MCF 10A (cell line): ENCODE measurements at regions of chr11 and their contacts with region 1.

Region 1: DNA sequence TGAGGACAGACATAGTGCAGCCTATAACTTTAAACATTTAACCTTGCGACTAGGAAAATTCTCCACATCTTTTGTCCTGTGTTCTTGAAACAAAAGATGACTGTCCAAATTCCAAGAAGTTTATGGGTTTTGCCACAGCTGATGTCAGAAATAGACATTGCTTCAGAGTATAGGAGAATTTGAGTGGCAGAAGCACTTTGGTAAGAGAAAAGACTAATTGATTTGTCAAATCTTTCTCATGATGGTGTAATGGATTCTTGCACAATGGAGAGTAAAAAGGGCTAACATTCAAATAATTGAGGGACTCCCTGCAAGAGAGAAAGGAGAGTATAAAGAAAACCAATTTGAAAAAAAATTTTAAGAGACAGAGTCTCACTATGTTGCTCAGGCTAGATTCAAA is 25.3 kb downstream of the C11orf58 start:
- DNase-seq: no peak
- H3K4me3 Mint-ChIP-seq: no peak overlapping the region
- H3K27ac Mint-ChIP-seq: no peak overlapping the region
- H3K4me1 Mint-ChIP-seq: no peaks in the 10 kb centered on the region
- H3K27me3 Mint-ChIP-seq: no peaks in the 10 kb centered on the region
- CTCF ChIP-seq: no peak

Region 2: DNA sequence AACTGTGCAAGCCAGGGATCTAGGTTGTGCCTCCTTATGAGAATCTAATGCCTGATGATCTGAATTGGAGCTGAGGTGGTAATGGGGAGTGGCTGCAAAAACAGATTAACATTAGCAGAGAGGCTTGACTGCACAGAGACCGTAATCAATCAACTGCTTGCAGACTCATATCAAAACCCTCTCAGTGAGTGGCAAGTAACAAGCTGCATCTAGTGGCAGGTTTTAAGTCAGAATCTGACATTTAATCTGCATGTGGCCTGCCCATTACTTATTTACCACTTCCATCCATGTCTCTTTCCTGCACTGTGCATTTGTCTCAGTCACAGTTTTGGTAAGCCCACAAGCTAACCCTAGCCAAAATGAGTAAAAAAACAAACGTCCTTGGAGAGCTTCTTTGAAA is 14.1 kb before region 1 on chr11:
- CTCF ChIA-PET with region 1: interaction called, 4 read pairs
- POLR2A ChIA-PET with region 1: interaction called, 11 read pairs
- intact Hi-C with region 1: no loop called
- DNase-seq: no peak
- H3K4me3 Mint-ChIP-seq: no peak overlapping the region
- H3K27ac Mint-ChIP-seq: no peak overlapping the region
- H3K4me1 Mint-ChIP-seq: peaks cover 9% of the 10 kb centered on the region
- H3K27me3 Mint-ChIP-seq: no peaks in the 10 kb centered on the region
- CTCF ChIP-seq: no peak

Region 3: DNA sequence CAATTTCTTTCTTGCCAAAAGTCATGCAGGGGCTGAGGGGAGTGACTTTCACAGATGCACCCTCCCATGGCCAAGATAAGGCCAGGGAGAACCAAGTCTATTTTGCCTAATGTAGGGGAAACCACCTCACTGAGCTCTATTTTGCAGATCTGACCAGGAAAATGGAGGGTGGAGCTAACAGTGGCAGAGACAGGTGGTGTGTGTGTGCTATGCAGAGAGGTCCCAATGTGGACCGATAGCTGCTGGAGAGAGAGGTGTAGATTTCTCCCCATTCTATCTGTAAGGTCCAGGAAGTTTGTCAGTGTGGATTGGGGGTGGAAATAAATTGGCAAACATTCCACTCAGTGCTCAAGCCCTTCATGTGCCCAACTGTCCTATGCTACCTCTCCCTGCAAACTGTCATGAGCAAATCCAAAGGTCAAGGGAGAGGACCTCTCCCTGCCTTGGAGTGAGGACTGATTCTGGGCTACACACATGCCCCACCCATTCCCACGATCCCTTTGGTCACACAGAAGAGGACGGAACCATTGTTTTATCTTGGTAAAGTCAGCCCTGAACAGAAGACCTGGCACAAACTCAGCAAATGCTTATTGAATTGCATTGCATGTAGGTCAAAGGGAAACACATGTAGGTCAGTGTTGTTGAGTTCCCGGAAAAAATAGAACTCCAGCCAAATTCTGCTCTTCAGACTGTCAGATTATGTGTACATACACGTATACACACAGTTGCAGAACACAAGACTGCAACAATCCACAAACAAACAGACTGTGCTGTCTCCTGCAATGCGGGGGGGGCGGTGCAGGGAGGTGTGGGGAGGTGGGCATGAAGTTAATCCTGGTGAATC is 40.6 kb after region 1 on chr11:
- CTCF ChIA-PET with region 1: no interaction called
- POLR2A ChIA-PET with region 1: no interaction called
- intact Hi-C with region 1: no loop called
- DNase-seq: no peak
- H3K4me3 Mint-ChIP-seq: no peak overlapping the region
- H3K27ac Mint-ChIP-seq: no peak overlapping the region
- H3K4me1 Mint-ChIP-seq: no peaks in the 10 kb centered on the region
- H3K27me3 Mint-ChIP-seq: no peaks in the 10 kb centered on the region
- CTCF ChIP-seq: no peak